ENCODE measurements at regions of chr10 and their contacts with region 1.

Region 1: GRCh38 chr10:123021517-123021916 is 12.7 kb downstream of the ACADSB start:
- DNase-seq: no peak
- H3K4me3 ChIP-seq: no peak overlapping the region
- H3K27ac ChIP-seq: no peak overlapping the region
- H3K27me3 ChIP-seq: no peaks in the 10 kb centered on the region
- CTCF ChIP-seq: peak; percentile 49

Region 2: DNA sequence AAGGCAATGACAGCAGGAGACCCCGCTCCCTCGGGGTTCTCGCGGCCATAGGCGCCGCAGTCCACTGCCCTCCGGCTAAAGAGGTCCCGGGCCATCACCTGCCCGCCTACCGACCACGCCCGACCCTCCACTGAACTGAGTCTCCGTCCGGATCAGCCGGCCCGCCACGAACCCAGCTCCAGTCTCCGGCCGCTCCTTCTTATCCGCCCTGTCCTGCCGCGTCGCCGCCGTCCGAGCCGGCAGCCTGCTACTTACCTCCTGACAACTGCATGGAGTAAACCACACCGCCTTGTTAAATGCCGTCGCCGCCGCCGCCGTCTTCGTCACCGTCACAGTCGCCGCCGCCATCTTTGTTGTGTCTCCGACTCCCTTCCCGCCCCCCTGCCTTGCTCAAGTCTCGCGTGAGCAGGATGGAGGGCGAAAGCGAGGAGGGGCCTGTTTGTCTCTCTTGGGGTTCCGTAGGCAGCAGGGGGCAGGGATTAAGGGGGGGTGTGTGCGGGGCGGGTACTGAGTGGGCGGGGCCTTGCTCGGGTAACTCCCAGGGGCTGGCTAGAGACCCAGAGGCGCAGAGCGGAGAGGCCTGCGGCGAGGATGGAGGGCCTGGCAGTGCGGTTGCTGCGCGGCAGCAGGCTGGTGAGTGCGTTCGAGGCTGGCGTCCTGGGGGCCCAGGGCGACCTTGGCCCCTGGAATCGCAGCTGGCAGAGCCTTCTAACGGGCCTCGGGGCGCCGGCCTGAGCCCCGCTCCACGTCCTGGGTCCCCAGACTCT is 12.9 kb before region 1 on chr10 and contains the starts of genes ACADSB and IKZF5:
- CTCF ChIA-PET with region 1: interaction called, 13 read pairs
- POLR2A ChIA-PET with region 1: no interaction called
- DNase-seq: peak; percentile 95
- H3K4me3 ChIP-seq: peak within 1 kb of the TSS; percentile 91
- H3K27ac ChIP-seq: peak within 1 kb of the TSS; percentile 73
- H3K27me3 ChIP-seq: no peaks in the 10 kb centered on the region
- CTCF ChIP-seq: no peak
- polyA plus RNA-seq, gene ACADSB: 12.5 and 16.1 TPM in 2 replicates
- polyA plus RNA-seq, gene IKZF5: 6.6 and 7.8 TPM in 2 replicates

Measured in AG04450 (cell line).